ENCODE measurements at regions of chrX and their contacts with region 1.

Region 1: GRCh38 chrX:119729408-119730201 is 28.8 kb upstream of the SOWAHD start:
- DNase-seq: peak in 4 of 5 donors; percentile 39 to 59 (median 42)
- ATAC-seq: peak in 3 of 4 donors; percentile 30 to 58 (median 49)
- H3K4me3 ChIP-seq: no peak overlapping the region
- H3K27ac ChIP-seq: no peak overlapping the region
- H3K4me1 ChIP-seq: peaks cover 0 to 8% (median 0%) of the 10 kb centered on the region in 12 donors
- H3K27me3 ChIP-seq: no peaks in the 10 kb centered on the region
- CTCF ChIP-seq: peak; percentile 41 to 69 (median 58)
- POLR2A ChIP-seq: no peak

Region 2: GRCh38 chrX:119529345-119530276 is 200.0 kb before region 1 on chrX:
- intact Hi-C with region 1: loop called in 1 of 10 experiments (anchors 10 kb)
- DNase-seq: peak in 1 of 5 donors; percentile 9
- ATAC-seq: peak in 1 of 4 donors; percentile 39
- H3K4me3 ChIP-seq: no peak overlapping the region
- H3K27ac ChIP-seq: peak overlapping the region in 4 of 12 donors; percentile 4 to 46 (median 34)
- H3K4me1 ChIP-seq: peaks cover 0 to 11% (median 0%) of the 10 kb centered on the region in 12 donors
- H3K27me3 ChIP-seq: no peaks in the 10 kb centered on the region
- CTCF ChIP-seq: no peak
- POLR2A ChIP-seq: no peak

Region 3: DNA sequence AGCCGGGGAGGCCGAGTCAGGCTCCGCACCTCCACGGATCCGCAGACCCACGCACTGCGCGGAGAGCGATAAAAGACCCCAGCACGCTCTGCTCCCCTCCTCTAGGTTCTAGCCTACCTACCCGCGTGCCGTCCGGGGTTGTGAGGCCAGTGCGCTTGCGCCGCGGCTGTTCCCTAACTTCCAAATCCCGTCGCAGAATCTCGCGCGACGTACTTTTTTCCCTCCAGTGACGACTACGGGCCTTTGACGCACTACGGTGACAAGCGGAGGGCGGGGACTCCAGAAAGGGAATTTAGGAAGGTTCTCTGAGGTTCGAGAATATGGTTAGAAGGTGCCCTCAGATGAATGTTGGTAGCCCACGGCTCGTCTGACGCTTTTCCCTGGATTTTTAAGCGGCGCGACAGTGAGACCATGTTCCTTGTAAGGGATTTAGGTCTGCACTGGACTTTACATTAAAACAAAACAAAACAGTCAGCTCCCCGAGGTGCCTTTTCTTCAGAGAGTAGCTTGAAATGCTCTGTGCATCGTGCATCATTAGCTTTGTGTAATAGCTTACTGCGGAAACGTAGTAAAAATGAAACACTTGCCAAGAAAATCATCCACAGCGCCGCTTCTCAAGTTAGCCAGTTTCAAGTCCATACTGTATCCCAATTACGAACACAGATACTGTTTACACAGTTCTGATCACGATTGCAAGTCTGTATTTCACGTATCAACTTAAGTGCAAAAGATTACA is 123.2 kb before region 1 on chrX and contains the start of gene NKRF:
- intact Hi-C with region 1: loop called in 9 of 10 experiments (anchors 2 to 10 kb)
- DNase-seq: peak; percentile 91 to 96 (median 93)
- ATAC-seq: peak; percentile 86 to 96 (median 94)
- H3K4me3 ChIP-seq: peak within 1 kb of the TSS; percentile 55 to 98 (median 76)
- H3K27ac ChIP-seq: peak within 1 kb of the TSS; percentile 65 to 97 (median 88)
- H3K4me1 ChIP-seq: peaks cover 0 to 7% (median 0%) of the 10 kb centered on the region in 12 donors
- H3K27me3 ChIP-seq: peaks cover 0 to 9% (median 0%) of the 10 kb centered on the region in 9 donors
- CTCF ChIP-seq: no peak
- POLR2A ChIP-seq: peak in 1 of 2 donors; percentile 80
- total RNA-seq, gene NKRF: 3.9 to 6.0 (median 4.8) TPM

Region 4: GRCh38 chrX:119617517-119618164 is 112.0 kb before region 1 on chrX:
- intact Hi-C with region 1: loop called in 5 of 10 experiments (anchors 5 to 10 kb)
- DNase-seq: no peak
- ATAC-seq: no peak
- H3K4me3 ChIP-seq: no peak overlapping the region
- H3K27ac ChIP-seq: peak overlapping the region in 1 of 12 donors; percentile 58
- H3K4me1 ChIP-seq: peaks cover 0 to 16% (median 0%) of the 10 kb centered on the region in 12 donors
- H3K27me3 ChIP-seq: no peaks in the 10 kb centered on the region
- CTCF ChIP-seq: no peak
- POLR2A ChIP-seq: no peak

Region 5: DNA sequence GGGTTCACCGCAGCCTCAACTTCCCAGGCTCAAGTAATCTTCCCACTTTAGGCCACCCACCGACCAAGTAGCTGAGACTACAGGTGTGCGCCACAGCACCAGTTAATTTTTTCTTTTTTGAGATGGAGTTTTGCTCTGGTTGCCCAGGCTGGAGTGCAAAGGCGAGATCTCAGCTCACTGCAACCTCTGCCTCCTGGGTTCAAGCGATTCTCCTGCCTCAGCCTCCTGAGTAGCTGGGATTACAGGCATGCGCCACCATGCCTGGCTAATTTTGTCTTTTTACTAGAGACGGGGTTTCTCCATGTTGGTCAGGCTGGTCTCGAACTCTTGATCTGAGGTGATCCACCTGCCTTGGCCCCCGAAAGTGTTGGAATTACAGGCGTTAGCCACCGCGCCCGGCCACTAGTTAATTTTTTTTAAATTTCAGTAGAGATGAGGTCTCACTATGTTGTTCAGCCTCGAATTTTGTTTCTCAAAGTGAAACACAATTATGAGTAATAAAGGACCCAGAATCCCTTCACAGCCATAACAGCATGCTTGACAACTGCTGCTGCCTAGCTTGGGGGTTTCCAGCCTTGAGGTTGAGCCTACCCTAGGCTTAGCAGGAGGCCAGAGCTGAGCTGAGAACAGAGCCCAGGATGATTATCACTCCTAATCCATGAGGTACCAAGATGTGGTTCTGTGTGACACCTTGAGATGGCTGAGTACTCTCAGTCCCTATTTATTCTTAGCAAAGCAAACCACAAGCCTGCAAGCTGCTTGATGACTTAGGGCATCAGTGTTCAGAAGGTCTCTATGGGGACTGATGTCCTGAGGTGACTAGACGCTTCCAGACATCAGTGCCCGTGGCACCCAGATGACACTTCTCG is 81.8 kb before region 1 on chrX:
- intact Hi-C with region 1: loop called in 2 of 10 experiments (anchors 10 kb)
- DNase-seq: no peak
- ATAC-seq: no peak
- H3K4me3 ChIP-seq: no peak overlapping the region
- H3K27ac ChIP-seq: no peak overlapping the region
- H3K4me1 ChIP-seq: no peaks in the 10 kb centered on the region
- H3K27me3 ChIP-seq: no peaks in the 10 kb centered on the region
- CTCF ChIP-seq: no peak
- POLR2A ChIP-seq: no peak

Region 6: GRCh38 chrX:119655125-119655524 is 74.5 kb before region 1 on chrX:
- intact Hi-C with region 1: loop called in 1 of 10 experiments (anchors 10 kb)
- DNase-seq: peak in 4 of 5 donors; percentile 30 to 74 (median 36)
- ATAC-seq: peak in 3 of 4 donors; percentile 76 to 84 (median 77)
- H3K4me3 ChIP-seq: no peak overlapping the region
- H3K27ac ChIP-seq: peak overlapping the region in 6 of 12 donors; percentile 32 to 70 (median 67)
- H3K4me1 ChIP-seq: peaks cover 0 to 6% (median 0%) of the 10 kb centered on the region in 12 donors
- H3K27me3 ChIP-seq: no peaks in the 10 kb centered on the region
- CTCF ChIP-seq: no peak
- POLR2A ChIP-seq: peak in 1 of 2 donors; percentile 16

Region 7: DNA sequence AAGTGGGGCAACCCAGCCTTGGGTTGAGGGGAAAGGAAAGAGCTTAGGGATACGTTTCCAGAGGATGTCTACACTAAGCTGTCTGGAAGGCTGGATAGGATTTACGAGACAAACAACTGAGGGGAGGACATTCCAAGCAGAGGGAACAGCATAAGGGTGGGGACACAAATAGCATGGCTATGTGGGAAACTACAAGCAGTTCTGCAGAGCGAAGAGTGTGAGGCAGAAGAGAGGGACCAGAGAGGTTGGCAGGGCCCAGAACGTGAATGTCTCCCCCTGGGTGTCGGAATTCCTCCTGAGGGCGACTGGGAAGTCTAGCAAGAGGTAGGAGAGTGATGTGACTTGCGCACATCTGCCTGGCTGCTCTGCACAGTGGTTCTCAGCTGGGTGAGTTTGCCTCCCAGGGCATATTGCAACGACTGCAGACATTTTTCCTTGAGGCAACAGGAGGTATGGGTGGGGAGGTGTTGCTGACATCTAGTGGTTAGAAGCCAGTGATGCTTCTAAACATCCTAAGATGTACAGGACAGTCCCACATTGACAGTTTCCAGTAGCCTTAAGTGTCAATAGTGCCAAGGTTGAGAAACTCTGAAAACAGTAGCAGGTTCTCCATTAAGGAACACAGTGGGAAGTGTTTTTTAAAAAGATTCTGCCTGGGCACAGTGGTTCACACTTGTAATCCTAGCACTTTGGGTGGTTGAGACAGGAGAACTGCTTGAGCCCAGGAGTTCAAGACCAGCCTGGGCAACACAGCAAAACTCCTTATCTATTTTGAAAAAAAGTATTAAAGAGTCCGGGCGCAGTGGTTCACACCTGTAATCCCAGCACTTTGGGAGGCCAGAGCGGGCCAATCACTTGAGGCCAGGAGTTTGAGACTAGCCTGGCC is 151.2 kb after region 1 on chrX:
- intact Hi-C with region 1: no loop called
- DNase-seq: peak in 1 of 5 donors; percentile 7
- ATAC-seq: peak in 3 of 4 donors; percentile 73 to 86 (median 79)
- H3K4me3 ChIP-seq: no peak overlapping the region
- H3K27ac ChIP-seq: no peak overlapping the region
- H3K4me1 ChIP-seq: no peaks in the 10 kb centered on the region
- H3K27me3 ChIP-seq: no peaks in the 10 kb centered on the region
- CTCF ChIP-seq: peak; percentile 28 to 62 (median 42)
- POLR2A ChIP-seq: no peak

Region 8: DNA sequence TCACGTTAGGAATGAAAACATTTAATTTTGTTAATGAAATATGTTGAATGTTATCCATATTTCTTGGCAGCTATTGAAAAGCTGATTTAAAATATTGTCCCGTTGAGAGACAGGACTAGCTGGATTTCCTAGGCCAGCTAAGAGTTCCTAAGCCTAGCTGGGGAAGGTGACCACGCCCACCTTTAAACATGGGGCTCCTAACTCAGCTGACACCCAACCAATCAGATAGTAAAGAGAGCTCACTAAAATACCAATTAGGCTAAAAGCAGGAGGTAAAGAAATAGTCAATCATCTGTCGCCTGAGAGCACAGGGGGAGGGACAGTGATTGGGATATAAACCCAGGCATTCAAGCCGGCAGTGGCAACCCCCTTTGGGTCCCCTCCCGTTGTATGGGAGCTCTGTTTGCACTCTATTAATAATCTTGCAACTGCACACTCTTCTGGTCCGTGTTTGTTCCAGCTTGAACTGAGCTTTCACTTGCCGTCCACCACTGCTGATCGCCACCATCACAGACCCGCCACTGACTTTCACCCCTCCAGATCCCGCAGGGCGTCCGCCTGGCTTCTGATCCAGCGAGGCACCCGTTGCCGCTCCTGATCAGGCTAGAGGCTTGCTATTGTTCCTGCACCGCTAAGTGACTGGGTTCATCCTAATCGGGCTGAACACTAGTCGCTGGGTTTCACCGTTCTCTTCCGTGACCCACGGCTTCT is 1626.7 kb after region 1 on chrX:
- intact Hi-C with region 1: no loop called
- DNase-seq: no peak
- ATAC-seq: no peak
- H3K4me3 ChIP-seq: no peak overlapping the region
- H3K27ac ChIP-seq: no peak overlapping the region
- H3K4me1 ChIP-seq: no peaks in the 10 kb centered on the region
- H3K27me3 ChIP-seq: no peaks in the 10 kb centered on the region
- CTCF ChIP-seq: no peak
- POLR2A ChIP-seq: no peak

Measured in heart left ventricle (tissue), 16 donors.